B cell (primary cell): ENCODE measurements at regions of chr5 and their contacts with region 1.

Region 1: GRCh38 chr5:81851481-81852178 is 100.7 kb upstream of the SSBP2 start:
- DNase-seq: peak; percentile 90
- ATAC-seq: peak; percentile 89
- H3K4me3 ChIP-seq: peak overlapping the region; percentile 49 to 75 (median 71)
- H3K4me3 Mint-ChIP-seq: peak overlapping the region; percentile 99
- H3K27ac ChIP-seq: peak overlapping the region; percentile 34 to 67
- H3K27ac Mint-ChIP-seq: peak overlapping the region; percentile 98
- H3K4me1 ChIP-seq: peaks cover 17 to 24% of the 10 kb centered on the region in 2 donors
- H3K4me1 Mint-ChIP-seq: peaks cover 33% of the 10 kb centered on the region
- H3K27me3 ChIP-seq: no peaks in the 10 kb centered on the region
- H3K27me3 Mint-ChIP-seq: no peaks in the 10 kb centered on the region
- CTCF ChIP-seq: no peak

Region 2: DNA sequence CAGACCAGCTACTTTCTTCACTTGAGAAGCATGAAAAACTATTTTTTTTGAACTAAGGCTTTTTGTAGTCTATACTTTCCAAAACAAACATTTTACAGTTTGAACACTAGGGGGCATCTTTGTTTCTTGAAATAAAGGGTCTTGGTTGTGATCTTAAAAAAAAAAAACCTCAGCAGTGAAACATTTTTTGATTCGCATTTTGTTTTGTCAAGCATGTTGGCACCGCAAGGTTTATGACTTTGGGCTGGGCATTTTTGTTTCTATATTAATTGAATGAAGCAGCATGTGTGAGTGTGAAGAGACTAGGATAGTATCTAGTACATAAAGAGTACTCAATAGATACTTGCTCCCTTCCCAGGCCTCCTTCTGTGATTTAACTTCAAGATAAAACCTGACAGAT is 426.1 kb before region 1 on chr5:
- CTCF ChIA-PET with region 1: no interaction called
- POLR2A ChIA-PET with region 1: no interaction called
- intact Hi-C with region 1: loop called (anchors 5 kb)
- DNase-seq: peak; percentile 54
- ATAC-seq: no peak
- H3K4me3 ChIP-seq: no peak overlapping the region
- H3K4me3 Mint-ChIP-seq: no peak overlapping the region
- H3K27ac ChIP-seq: no peak overlapping the region
- H3K27ac Mint-ChIP-seq: peak overlapping the region; percentile 70
- H3K4me1 ChIP-seq: no peaks in the 10 kb centered on the region
- H3K4me1 Mint-ChIP-seq: peaks cover 4% of the 10 kb centered on the region
- H3K27me3 ChIP-seq: no peaks in the 10 kb centered on the region
- H3K27me3 Mint-ChIP-seq: no peaks in the 10 kb centered on the region
- CTCF ChIP-seq: peak; percentile 85

Region 3: GRCh38 chr5:81763294-81763928 is 88.2 kb before region 1 on chr5:
- CTCF ChIA-PET with region 1: no interaction called
- POLR2A ChIA-PET with region 1: interaction called, 11 read pairs
- intact Hi-C with region 1: no loop called
- DNase-seq: no peak
- ATAC-seq: no peak
- H3K4me3 ChIP-seq: no peak overlapping the region
- H3K4me3 Mint-ChIP-seq: no peak overlapping the region
- H3K27ac ChIP-seq: no peak overlapping the region
- H3K27ac Mint-ChIP-seq: no peak overlapping the region
- H3K4me1 ChIP-seq: peaks cover 6 to 7% of the 10 kb centered on the region in 2 donors
- H3K4me1 Mint-ChIP-seq: peaks cover 11% of the 10 kb centered on the region
- H3K27me3 ChIP-seq: no peaks in the 10 kb centered on the region
- H3K27me3 Mint-ChIP-seq: no peaks in the 10 kb centered on the region
- CTCF ChIP-seq: no peak

Region 4: DNA sequence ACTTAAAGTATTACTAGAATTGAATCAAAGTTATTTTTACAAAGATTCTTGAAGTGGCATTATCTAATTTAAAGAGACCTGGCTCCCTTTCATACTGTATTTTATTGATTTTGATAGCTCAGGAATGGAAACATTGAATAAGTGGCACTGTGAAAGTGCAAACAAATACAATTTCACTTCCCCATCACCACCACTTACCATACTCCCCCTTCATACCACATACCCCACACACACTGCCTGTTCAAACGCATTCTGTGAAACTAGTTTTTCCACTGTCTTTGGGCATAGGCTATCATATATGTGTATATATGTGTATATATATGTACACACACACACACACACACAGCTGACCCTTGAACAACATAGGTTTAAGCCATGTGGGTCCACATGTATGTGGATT is 58.0 kb after region 1 on chr5:
- CTCF ChIA-PET with region 1: no interaction called
- POLR2A ChIA-PET with region 1: no interaction called
- intact Hi-C with region 1: loop called (anchors 5 kb)
- DNase-seq: peak; percentile 41
- ATAC-seq: peak; percentile 89
- H3K4me3 ChIP-seq: no peak overlapping the region
- H3K4me3 Mint-ChIP-seq: peak overlapping the region; percentile 30
- H3K27ac ChIP-seq: no peak overlapping the region
- H3K27ac Mint-ChIP-seq: peak overlapping the region; percentile 18
- H3K4me1 ChIP-seq: peaks cover 10 to 13% of the 10 kb centered on the region in 2 donors
- H3K4me1 Mint-ChIP-seq: peaks cover 31% of the 10 kb centered on the region
- H3K27me3 ChIP-seq: no peaks in the 10 kb centered on the region
- H3K27me3 Mint-ChIP-seq: no peaks in the 10 kb centered on the region
- CTCF ChIP-seq: no peak

Region 5: DNA sequence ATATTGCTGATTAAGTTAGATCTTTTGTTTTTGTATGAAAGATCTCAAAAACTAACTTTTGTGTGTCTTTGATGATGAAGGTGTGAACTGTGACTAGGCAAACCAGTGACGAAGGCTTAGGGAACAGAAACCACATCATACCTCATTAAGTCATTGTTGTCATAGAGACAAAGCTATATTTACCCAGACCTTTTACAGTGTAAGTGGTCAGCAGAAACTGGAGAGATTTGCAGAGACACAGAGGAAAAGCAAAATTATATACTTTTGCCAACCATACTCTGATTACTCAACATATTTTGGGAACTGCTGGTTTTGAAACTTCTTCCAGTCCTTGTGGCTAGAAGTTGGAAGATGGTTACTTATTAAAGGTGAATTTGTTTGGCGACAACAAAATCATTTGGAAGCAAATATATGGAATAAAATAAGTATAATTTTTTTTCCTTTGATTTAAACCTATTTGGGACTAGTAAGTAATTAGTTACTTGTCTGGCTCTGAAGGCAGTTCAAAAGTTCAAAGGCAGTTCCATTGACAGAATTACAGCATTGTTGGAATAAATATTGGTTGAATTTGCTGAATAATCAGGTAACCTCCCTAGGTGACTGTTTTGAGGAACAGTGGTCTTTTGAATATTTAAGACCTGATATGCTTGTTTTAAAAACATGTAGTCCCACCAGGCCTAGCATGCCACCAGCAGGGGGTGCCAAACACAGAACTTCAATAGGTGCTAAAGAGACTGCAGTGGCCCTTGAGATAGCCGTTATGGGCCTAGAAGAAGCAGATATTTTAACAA is 322.7 kb after region 1 on chr5:
- CTCF ChIA-PET with region 1: no interaction called
- POLR2A ChIA-PET with region 1: no interaction called
- intact Hi-C with region 1: loop called (anchors 5 kb)
- DNase-seq: peak; percentile 74
- ATAC-seq: peak; percentile 88
- H3K4me3 ChIP-seq: no peak overlapping the region
- H3K4me3 Mint-ChIP-seq: peak overlapping the region; percentile 31
- H3K27ac ChIP-seq: peak overlapping the region in 1 of 2 donors; percentile 32
- H3K27ac Mint-ChIP-seq: peak overlapping the region; percentile 60
- H3K4me1 ChIP-seq: peaks cover 9% of the 10 kb centered on the region in 2 donors
- H3K4me1 Mint-ChIP-seq: peaks cover 18% of the 10 kb centered on the region
- H3K27me3 ChIP-seq: no peaks in the 10 kb centered on the region
- H3K27me3 Mint-ChIP-seq: no peaks in the 10 kb centered on the region
- CTCF ChIP-seq: peak; percentile 71